B cell (primary cell): ENCODE measurements at regions of chr11 and their contacts with region 1.

Region 1: DNA sequence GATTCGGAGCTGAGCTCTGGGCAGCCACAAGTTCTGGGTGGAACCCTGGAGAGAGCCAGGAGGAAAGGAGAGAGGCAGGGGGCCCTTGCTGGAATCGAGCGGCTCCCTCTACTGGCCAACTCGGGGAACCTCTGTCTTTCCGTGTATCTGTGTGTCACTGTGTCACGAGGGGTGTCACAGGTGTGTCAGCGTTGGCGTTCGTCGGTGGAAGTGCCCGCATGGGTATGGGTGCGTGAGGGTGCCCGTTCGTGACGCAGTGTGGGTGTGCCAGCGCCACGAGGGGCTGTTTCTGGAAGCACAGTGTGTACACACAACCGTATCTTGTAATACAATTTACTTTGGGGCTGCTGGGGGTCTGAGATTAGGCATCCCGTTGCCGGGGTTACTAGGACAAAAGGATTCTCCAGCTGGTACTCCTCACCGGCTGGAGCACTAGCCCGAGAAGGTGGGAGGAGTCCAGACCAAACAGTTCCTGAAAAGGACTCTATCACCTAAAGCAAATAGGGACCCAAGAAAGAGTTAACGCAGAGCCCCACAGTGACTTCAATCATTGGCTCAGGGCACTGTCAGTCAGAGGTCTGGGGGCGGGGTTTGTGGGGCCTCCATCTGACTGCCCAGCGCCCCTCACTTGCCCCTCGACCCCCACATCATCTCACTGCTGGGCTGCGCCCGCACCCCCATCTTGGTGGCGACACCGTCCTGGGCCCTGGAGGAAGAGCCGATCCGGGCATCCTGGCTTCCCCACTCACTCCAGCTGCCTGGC is 2.6 kb upstream of the BCL9L start:
- DNase-seq: peak; percentile 99
- ATAC-seq: peak; percentile 56
- H3K4me3 ChIP-seq: peak overlapping the region; percentile 32 to 86 (median 66)
- H3K4me3 Mint-ChIP-seq: peak overlapping the region; percentile 99
- H3K27ac ChIP-seq: peak overlapping the region; percentile 96 to 99
- H3K27ac Mint-ChIP-seq: peak overlapping the region; percentile 98
- H3K4me1 ChIP-seq: peaks cover 40 to 58% of the 10 kb centered on the region in 2 donors
- H3K4me1 Mint-ChIP-seq: peaks cover 63% of the 10 kb centered on the region
- H3K27me3 ChIP-seq: no peaks in the 10 kb centered on the region
- H3K27me3 Mint-ChIP-seq: no peaks in the 10 kb centered on the region
- CTCF ChIP-seq: peak; percentile 87

Region 2: DNA sequence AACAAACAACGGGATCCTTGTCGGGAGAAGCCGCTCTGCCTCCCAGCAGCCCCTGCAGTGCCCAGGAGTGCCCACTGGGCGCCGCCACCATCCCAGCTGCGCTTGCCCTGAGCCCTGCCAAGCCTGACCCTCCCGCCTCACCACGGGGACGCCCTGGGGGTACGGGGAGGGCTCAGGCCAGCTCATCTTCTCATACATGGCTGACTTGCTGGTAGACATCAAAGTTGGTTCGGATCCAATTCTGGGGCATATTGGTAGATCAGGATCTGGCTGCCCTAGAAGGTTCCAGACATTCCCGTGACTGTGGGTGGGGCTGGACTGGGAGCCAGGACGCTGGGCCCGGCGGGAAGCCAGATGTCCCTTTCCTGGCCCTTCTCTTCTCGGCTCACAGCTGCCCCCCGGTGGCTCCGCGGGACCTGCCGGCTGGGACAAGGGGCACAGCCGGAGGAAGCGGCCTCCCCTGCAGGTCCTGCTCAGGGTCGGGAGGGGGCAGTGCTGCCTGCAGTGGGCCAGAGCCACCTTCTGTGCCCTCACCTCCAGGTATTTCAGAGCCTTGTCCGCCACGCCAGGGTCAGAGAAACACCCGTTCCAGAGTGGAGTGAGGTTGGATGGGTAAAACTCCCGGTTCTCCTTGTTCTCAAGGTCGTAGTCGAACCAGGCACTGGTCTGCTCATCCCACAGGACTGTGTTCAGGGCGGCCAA is 238.3 kb before region 1 on chr11:
- CTCF ChIA-PET with region 1: interaction called, 57 read pairs
- POLR2A ChIA-PET with region 1: no interaction called
- intact Hi-C with region 1: loop called (anchors 1 kb)
- DNase-seq: peak; percentile 88
- ATAC-seq: peak; percentile 94
- H3K4me3 ChIP-seq: peak overlapping the region in 4 of 5 experiments; percentile 36 to 67 (median 52)
- H3K4me3 Mint-ChIP-seq: peak overlapping the region; percentile 85
- H3K27ac ChIP-seq: peak overlapping the region in 1 of 2 donors; percentile 51
- H3K27ac Mint-ChIP-seq: peak overlapping the region; percentile 68
- H3K4me1 ChIP-seq: peaks cover 10 to 27% of the 10 kb centered on the region in 2 donors
- H3K4me1 Mint-ChIP-seq: peaks cover 20% of the 10 kb centered on the region
- H3K27me3 ChIP-seq: peaks cover 0 to 4% (median 0%) of the 10 kb centered on the region in 4 experiments
- H3K27me3 Mint-ChIP-seq: peaks cover 10% of the 10 kb centered on the region
- CTCF ChIP-seq: peak; percentile 96

Region 3: DNA sequence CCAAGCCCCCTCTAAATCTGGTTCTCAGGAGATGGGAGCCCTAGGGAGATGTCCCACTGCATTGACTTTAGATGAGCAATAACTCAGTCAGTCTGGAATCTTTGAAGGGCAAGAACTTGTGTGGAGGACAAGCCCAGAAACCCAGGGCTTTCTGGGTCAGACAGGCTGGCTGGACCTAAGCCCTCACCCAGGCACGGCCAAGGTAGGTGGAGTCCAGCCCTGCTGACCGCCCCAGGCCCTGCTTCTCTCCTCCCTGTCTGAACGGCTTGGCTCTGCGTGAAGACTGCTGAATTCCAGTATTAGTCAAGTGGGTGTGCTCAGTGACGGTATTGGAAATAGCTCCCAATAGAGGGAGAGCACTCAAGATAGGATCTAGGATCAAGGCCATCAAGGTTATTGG is 38.5 kb before region 1 on chr11:
- CTCF ChIA-PET with region 1: interaction called, 13 read pairs
- POLR2A ChIA-PET with region 1: interaction called, 17 read pairs
- intact Hi-C with region 1: no loop called
- DNase-seq: peak; percentile 25
- ATAC-seq: no peak
- H3K4me3 ChIP-seq: peak overlapping the region in 2 of 5 experiments; percentile 97 to 99
- H3K4me3 Mint-ChIP-seq: peak overlapping the region; percentile 97
- H3K27ac ChIP-seq: peak overlapping the region; percentile 91 to 99
- H3K27ac Mint-ChIP-seq: peak overlapping the region; percentile 90
- H3K4me1 ChIP-seq: peaks cover 84 to 100% of the 10 kb centered on the region in 2 donors
- H3K4me1 Mint-ChIP-seq: peaks cover 93% of the 10 kb centered on the region
- H3K27me3 ChIP-seq: no peaks in the 10 kb centered on the region
- H3K27me3 Mint-ChIP-seq: no peaks in the 10 kb centered on the region
- CTCF ChIP-seq: no peak

Region 4: DNA sequence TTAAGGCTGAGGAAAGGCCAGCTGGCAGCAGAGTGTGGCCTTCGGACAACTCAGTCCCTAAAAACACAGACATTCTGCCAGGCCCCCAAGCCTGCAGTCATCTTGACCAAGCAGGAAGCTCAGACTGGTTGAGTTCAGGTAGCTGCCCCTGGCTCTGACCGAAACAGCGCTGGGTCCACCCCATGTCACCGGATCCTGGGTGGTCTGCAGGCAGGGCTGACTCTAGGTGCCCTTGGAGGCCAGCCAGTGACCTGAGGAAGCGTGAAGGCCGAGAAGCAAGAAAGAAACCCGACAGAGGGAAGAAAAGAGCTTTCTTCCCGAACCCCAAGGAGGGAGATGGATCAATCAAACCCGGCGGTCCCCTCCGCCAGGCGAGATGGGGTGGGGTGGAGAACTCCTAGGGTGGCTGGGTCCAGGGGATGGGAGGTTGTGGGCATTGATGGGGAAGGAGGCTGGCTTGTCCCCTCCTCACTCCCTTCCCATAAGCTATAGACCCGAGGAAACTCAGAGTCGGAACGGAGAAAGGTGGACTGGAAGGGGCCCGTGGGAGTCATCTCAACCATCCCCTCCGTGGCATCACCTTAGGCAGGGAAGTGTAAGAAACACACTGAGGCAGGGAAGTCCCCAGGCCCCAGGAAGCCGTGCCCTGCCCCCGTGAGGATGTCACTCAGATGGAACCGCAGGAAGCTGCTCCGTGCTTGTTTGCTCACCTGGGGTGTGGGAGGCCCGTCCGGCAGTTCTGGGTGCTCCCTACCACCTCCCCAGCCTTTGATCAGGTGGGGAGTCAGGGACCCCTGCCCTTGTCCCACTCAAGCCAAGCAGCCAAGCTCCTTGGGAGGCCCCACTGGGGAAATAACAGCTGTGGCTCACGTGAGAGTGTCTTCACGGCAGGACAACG is 32.9 kb before region 1 on chr11:
- CTCF ChIA-PET with region 1: interaction called, 13 read pairs
- POLR2A ChIA-PET with region 1: interaction called, 17 read pairs
- intact Hi-C with region 1: no loop called
- DNase-seq: peak; percentile 91
- ATAC-seq: peak; percentile 59
- H3K4me3 ChIP-seq: peak overlapping the region in 4 of 5 experiments; percentile 28 to 51 (median 44)
- H3K4me3 Mint-ChIP-seq: peak overlapping the region; percentile 79
- H3K27ac ChIP-seq: peak overlapping the region; percentile 95 to 99
- H3K27ac Mint-ChIP-seq: peak overlapping the region; percentile 86
- H3K4me1 ChIP-seq: peaks cover 73 to 83% of the 10 kb centered on the region in 2 donors
- H3K4me1 Mint-ChIP-seq: peaks cover 83% of the 10 kb centered on the region
- H3K27me3 ChIP-seq: no peaks in the 10 kb centered on the region
- H3K27me3 Mint-ChIP-seq: no peaks in the 10 kb centered on the region
- CTCF ChIP-seq: no peak

Region 5: DNA sequence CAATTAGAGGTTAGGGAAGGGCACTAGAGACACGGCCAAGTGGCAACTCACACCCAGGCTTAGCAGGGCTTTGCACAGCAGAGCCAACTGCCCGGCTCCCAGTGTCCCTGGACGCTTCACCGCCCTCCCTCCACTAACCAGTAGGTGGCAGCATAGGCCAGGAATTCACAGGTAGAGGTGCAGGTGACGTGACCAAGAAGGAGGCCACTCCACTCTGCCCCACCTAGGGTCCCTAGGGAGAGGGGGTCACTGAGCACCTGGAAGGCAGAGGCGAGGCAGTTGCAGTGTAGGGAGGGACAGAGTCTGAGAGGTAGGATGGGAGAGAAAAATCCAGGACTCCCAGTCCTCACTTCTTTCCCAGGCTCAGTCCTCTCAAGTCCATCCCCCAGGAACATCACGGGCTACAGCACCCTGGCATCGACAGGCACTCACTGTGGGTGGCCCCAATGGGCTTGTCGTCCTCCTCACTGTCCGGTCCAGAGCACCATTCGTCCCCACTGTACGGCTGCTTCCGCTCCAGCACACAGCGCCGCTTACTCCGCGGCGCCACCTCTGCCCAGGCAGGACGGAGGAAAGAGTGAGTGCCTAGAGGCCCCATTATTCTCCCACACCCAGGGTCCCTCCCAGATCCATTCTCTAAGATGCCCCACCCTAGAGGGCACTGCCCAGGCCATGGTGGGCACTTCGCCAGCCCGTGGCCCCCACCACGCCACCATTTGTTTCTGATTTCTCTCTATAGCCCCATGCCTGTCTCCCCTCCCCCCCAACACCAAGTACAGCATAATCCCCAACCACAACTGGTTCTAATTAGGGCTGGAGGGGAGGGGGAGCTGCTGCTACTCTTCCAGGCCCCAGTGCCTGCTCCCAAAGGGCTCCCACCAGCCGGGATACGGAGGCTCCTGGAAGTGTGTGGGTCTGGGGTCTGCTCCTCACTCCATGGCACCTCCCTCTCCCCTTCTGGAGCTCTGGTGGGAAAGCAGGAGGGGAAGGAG is 20.9 kb before region 1 on chr11:
- CTCF ChIA-PET with region 1: interaction called, 288 read pairs
- POLR2A ChIA-PET with region 1: interaction called, 38 read pairs
- intact Hi-C with region 1: loop called (anchors 1 kb)
- DNase-seq: peak; percentile 90
- ATAC-seq: peak; percentile 88
- H3K4me3 ChIP-seq: no peak overlapping the region
- H3K4me3 Mint-ChIP-seq: no peak overlapping the region
- H3K27ac ChIP-seq: no peak overlapping the region
- H3K27ac Mint-ChIP-seq: peak overlapping the region; percentile 74
- H3K4me1 ChIP-seq: peaks cover 34 to 55% of the 10 kb centered on the region in 2 donors
- H3K4me1 Mint-ChIP-seq: peaks cover 36% of the 10 kb centered on the region
- H3K27me3 ChIP-seq: no peaks in the 10 kb centered on the region
- H3K27me3 Mint-ChIP-seq: no peaks in the 10 kb centered on the region
- CTCF ChIP-seq: peak; percentile 87

Region 6: GRCh38 chr11:118914178-118914918 is 13.9 kb before region 1 on chr11:
- CTCF ChIA-PET with region 1: interaction called, 288 read pairs
- POLR2A ChIA-PET with region 1: interaction called, 38 read pairs
- intact Hi-C with region 1: loop called (anchors 1 kb)
- DNase-seq: peak; percentile 71
- ATAC-seq: peak; percentile 35
- H3K4me3 ChIP-seq: peak overlapping the region in 4 of 5 experiments; percentile 20 to 33 (median 22)
- H3K4me3 Mint-ChIP-seq: peak overlapping the region; percentile 77
- H3K27ac ChIP-seq: peak overlapping the region; percentile 87 to 94
- H3K27ac Mint-ChIP-seq: peak overlapping the region; percentile 94
- H3K4me1 ChIP-seq: peaks cover 85 to 98% of the 10 kb centered on the region in 2 donors
- H3K4me1 Mint-ChIP-seq: peaks cover 80% of the 10 kb centered on the region
- H3K27me3 ChIP-seq: no peaks in the 10 kb centered on the region
- H3K27me3 Mint-ChIP-seq: no peaks in the 10 kb centered on the region
- CTCF ChIP-seq: no peak

Region 7: DNA sequence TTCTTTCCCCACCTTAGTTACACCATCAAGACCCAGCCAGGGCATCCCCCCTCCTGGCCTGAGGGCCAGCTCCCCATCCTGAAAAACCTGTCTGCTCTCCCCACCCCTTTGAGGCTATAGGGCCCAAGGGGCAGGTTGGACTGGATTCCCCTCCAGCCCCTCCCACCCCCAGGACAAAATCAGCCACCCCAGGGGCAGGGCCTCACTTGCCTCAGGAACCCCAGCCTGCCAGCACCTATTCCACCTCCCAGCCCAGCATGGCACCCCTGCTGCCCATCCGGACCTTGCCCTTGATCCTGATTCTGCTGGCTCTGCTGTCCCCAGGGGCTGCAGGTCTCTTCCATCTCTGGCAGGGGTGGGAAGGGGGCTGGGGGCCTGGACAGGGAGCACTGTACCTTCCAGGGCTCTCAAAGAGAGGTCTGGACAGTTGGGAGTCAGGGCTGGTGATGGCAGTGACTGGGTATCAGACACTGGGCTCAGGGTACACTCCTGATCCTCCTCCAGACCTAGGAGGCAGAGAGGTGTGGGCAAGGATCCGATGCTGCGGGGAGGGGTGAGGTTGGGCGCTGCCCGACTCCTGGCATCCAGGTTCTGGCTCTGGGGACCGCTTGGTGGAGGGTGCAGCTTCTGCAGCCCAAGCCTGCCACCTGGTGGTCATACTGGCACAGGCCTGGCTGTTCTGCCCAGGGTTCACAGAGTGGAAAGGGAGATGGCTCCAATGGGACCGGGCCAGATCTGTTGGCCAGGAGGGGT is 28.0 kb after region 1 on chr11 and contains the start of gene UPK2:
- CTCF ChIA-PET with region 1: interaction called, 5 read pairs
- POLR2A ChIA-PET with region 1: no interaction called
- intact Hi-C with region 1: loop called (anchors 1 kb)
- DNase-seq: peak; percentile 89
- ATAC-seq: peak; percentile 99
- H3K4me3 ChIP-seq: no peak within 1 kb of the TSS
- H3K4me3 Mint-ChIP-seq: no peak within 1 kb of the TSS
- H3K27ac ChIP-seq: no peak within 1 kb of the TSS
- H3K27ac Mint-ChIP-seq: peak within 1 kb of the TSS; percentile 53
- H3K4me1 ChIP-seq: peaks cover 0 to 6% of the 10 kb centered on the region in 2 donors
- H3K4me1 Mint-ChIP-seq: peaks cover 5% of the 10 kb centered on the region
- H3K27me3 ChIP-seq: peaks cover 0 to 13% (median 0%) of the 10 kb centered on the region in 4 experiments
- H3K27me3 Mint-ChIP-seq: peaks cover 22% of the 10 kb centered on the region
- CTCF ChIP-seq: peak; percentile 94
- total RNA-seq, gene UPK2: not detected in 2 replicates

Region 8: GRCh38 chr11:119460582-119460981 is 532.3 kb after region 1 on chr11:
- CTCF ChIA-PET with region 1: no interaction called
- POLR2A ChIA-PET with region 1: no interaction called
- intact Hi-C with region 1: no loop called
- DNase-seq: no peak
- ATAC-seq: no peak
- H3K4me3 ChIP-seq: no peak overlapping the region
- H3K4me3 Mint-ChIP-seq: no peak overlapping the region
- H3K27ac ChIP-seq: no peak overlapping the region
- H3K27ac Mint-ChIP-seq: no peak overlapping the region
- H3K4me1 ChIP-seq: no peaks in the 10 kb centered on the region
- H3K4me1 Mint-ChIP-seq: no peaks in the 10 kb centered on the region
- H3K27me3 ChIP-seq: no peaks in the 10 kb centered on the region
- H3K27me3 Mint-ChIP-seq: peaks cover 37% of the 10 kb centered on the region
- CTCF ChIP-seq: no peak